ENCODE measurements at regions of chr10 and their contacts with region 1.

Region 1: DNA sequence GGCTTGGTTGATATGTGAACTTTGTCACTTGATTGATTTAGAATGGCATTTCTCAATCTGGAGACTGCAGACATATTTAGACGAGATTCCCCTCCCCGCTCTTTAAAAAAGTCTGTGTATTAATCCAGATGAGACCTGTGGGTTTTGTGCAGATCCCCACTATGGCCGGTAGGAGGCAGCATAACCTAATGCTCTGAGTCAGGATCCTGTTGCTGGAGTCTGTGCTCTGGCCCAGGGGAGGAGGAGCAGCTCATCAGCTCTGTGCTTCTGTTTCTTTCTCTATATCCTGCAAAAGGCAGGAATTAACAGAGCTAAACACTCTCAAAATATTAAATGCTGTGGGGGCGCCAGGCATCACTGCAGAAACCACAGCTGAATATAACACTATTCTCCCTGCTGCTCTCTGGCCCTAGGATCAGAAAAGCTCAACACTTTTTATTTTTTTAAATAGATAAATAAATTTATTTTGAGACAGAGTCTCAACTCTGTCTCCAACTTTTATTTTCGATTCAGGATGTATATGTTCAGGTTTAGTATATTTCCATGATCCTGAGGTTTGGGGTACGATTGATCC is 23.9 kb upstream of the SEPHS1 start:
- ATAC-seq: peak; percentile 88 to 100 (median 98)
- H3K4me3 ChIP-seq: no peak overlapping the region
- H3K27ac ChIP-seq: no peak overlapping the region
- H3K4me1 ChIP-seq: no peaks in the 10 kb centered on the region

Region 2: DNA sequence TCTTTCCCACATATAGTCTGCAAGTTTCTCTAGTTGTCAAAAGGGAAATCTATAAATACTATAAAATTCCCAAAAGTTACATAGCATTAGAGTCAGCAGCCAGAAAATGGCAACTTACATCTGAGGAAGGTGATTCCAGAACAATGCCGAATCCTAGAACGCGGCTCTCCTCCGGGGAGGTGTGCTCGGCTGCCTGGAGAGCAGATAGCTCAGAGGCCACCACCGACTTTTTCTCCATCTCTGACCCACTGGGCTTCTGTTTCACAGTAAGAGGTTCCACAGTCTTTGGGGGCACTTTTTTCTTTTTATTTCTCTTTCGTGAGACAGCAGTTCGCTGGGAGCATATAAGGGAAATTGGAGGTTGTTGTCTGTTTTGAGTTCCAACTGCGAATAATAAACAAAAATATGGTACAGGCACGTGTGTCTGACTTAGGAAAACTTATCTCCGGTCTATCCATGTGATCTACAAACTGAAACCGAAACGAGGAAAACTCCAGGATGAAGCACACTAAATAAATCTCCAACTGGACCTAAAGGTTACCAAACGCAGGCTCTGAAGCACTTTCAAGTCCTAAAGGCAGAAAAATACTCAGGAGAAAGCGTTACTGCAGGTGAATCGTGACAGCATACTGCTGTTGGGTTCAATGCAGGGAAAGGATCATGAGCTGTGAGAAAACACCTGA is 120.7 kb after region 1 on chr10:
- in situ Hi-C with region 1: no loop called
- ATAC-seq: no peak
- H3K4me3 ChIP-seq: no peak overlapping the region
- H3K27ac ChIP-seq: no peak overlapping the region
- H3K4me1 ChIP-seq: peaks cover 0 to 3% of the 10 kb centered on the region in 2 donors

Region 3: DNA sequence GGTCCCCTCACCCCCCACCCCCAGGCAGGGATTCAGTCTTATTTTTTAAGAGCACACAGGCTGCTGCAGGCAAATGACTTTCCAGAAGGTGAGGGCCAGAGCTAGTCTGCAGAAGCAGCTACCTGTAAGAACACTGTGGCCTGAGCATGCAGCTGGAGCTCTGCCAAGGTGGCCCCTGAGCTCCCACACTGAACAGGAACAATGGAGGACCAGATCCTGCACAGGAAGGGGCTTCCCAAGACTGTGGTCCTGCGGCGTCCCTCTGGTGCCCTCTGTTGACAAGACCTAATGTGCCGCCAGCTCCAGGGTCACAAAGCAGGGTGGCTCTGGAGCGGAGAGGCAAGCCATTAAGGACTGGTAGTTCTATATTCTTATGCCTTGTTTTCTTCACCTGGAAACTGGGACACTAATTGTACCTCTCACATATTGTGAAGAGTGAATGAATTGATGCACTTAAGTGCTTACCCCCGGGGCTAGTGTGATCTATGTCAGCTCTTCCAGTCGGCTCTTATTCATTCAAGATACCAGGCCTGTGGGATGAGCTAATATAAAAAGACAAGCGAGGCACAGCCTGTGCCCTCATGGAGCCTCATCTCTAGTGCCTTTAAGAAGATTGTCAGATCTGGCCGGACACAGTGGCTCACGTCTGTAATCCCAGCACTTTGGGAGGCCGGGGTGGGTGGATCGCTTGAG is 164.8 kb after region 1 on chr10:
- in situ Hi-C with region 1: loop called in 1 of 9 experiments (anchors 25 kb)
- ATAC-seq: peak; percentile 73 to 100 (median 86)
- H3K4me3 ChIP-seq: no peak overlapping the region
- H3K27ac ChIP-seq: no peak overlapping the region
- H3K4me1 ChIP-seq: no peaks in the 10 kb centered on the region

Region 4: GRCh38 chr10:13556676-13557319 is 184.8 kb after region 1 on chr10:
- in situ Hi-C with region 1: loop called in 1 of 9 experiments (anchors 25 kb)
- ATAC-seq: peak in 6 of 8 experiments; percentile 36 to 57 (median 48)
- H3K4me3 ChIP-seq: no peak overlapping the region
- H3K27ac ChIP-seq: no peak overlapping the region
- H3K4me1 ChIP-seq: peaks cover 6 to 8% of the 10 kb centered on the region in 2 donors

Region 5: DNA sequence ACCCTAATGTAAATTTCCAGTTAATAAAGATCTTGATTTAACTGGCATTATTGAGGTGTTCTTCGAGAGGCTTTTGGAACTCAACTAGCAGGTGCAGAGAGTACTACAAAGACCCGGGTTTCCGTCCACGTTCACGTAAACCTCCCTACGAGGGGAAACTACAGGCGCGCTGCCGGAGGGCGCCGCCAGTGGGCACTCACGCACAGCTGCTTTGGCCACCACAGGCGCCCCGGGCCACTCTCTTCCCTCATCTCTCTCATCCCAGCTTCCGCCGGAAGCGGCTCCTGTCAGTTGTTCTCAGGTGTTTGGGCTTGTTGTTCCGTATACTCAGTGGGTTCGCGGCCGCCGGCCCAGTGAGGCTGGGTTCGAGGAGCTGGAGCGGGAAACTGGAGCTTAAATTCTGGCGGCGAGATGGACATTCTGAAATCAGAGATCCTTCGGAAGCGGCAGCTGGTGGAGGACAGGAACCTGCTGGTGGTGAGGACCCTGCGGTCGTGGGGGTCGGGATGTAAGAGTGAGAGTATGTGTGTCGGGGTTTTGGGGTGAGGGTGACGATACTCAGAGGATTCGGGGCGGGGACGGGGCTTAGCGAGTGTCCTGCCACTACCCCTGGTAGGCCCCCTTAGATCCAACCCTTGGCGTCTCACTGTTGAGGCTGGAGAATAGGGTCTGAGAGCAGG is 214.8 kb after region 1 on chr10 and contains the start of gene PRPF18:
- in situ Hi-C with region 1: loop called in 1 of 9 experiments (anchors 25 kb)
- ATAC-seq: peak; percentile 92 to 100 (median 99)
- H3K4me3 ChIP-seq: peak within 1 kb of the TSS; percentile 61 to 84 (median 82)
- H3K27ac ChIP-seq: peak within 1 kb of the TSS in 1 of 2 donors; percentile 42
- H3K4me1 ChIP-seq: peaks cover 4 to 9% of the 10 kb centered on the region in 2 donors
- total RNA-seq, gene PRPF18: 27.3 to 170 (median 34.7) TPM

Region 6: GRCh38 chr10:13758312-13758711 is 386.3 kb after region 1 on chr10:
- in situ Hi-C with region 1: loop called in 1 of 9 experiments (anchors 25 kb)
- ATAC-seq: peak in 7 of 8 experiments; percentile 87 to 99 (median 91)
- H3K4me3 ChIP-seq: no peak overlapping the region
- H3K27ac ChIP-seq: peak overlapping the region; percentile 8 to 65
- H3K4me1 ChIP-seq: peaks cover 21 to 29% of the 10 kb centered on the region in 2 donors